Sciatic nerve (tissue), 2 donors: ENCODE measurements at regions of chr3 and their contacts with region 1.

Region 1: GRCh38 chr3:9422712-9423424 is 25.5 kb downstream of the SETD5 start:
- DNase-seq: peak; percentile 85
- ATAC-seq: peak; percentile 99

Region 2: DNA sequence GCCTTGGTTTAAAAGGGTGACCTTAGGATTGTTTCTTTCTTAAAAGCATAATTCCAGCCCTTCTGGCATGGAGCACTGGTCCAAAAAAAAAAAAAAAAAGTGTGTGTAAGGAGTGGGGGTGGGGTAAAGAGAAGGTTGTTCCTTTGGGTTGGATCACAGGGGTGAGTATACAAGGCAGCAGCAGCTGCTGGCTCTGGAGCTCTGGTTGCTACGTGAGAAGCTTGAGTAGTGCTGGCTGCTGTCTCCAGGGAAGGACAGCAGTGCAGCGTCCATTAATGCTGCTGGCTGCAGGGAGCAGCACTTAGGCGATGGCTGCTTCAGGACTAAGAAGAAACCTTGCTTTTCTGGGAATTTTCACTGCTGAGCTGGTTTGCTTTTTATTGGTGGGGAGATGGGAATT is 23.1 kb before region 1 on chr3:
- intact Hi-C with region 1: loop called (anchors 2 kb)
- DNase-seq: peak; percentile 71
- ATAC-seq: peak; percentile 26